ENCODE measurements at regions of chr2 and their contacts with region 1.

Region 1: DNA sequence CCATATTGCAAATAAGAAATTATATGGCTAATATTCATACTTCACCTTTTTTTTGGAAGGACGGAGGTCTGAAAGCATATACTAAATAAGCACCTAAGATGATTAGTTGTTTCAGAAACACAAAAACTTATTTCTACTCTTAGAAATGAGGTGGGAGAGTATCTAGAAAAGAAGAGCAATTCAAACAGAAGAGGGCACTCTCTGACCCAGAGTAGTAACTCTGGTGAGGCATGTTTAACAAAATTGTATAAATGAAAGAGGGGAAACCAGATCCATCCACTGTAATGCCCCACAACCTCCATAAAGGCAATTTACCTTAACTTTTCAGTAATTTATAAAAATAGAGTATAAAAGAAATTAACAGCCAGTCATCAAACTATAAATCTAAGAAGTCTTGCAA is 669.6 kb upstream of the VRK2 start:
- H3K4me3 Mint-ChIP-seq: no peak overlapping the region
- H3K27ac Mint-ChIP-seq: no peak overlapping the region
- H3K4me1 Mint-ChIP-seq: peaks cover 5% of the 10 kb centered on the region
- H3K27me3 Mint-ChIP-seq: no peaks in the 10 kb centered on the region

Region 2: GRCh38 chr2:57296795-57297517 is 80.0 kb before region 1 on chr2:
- intact Hi-C with region 1: no loop called
- H3K4me3 Mint-ChIP-seq: no peak overlapping the region
- H3K27ac Mint-ChIP-seq: no peak overlapping the region
- H3K4me1 Mint-ChIP-seq: no peaks in the 10 kb centered on the region
- H3K27me3 Mint-ChIP-seq: no peaks in the 10 kb centered on the region

Region 3: GRCh38 chr2:57497489-57498096 is 120.6 kb after region 1 on chr2:
- intact Hi-C with region 1: loop called (anchors 1 kb)
- H3K4me3 Mint-ChIP-seq: no peak overlapping the region
- H3K27ac Mint-ChIP-seq: no peak overlapping the region
- H3K4me1 Mint-ChIP-seq: no peaks in the 10 kb centered on the region
- H3K27me3 Mint-ChIP-seq: no peaks in the 10 kb centered on the region

Region 4: DNA sequence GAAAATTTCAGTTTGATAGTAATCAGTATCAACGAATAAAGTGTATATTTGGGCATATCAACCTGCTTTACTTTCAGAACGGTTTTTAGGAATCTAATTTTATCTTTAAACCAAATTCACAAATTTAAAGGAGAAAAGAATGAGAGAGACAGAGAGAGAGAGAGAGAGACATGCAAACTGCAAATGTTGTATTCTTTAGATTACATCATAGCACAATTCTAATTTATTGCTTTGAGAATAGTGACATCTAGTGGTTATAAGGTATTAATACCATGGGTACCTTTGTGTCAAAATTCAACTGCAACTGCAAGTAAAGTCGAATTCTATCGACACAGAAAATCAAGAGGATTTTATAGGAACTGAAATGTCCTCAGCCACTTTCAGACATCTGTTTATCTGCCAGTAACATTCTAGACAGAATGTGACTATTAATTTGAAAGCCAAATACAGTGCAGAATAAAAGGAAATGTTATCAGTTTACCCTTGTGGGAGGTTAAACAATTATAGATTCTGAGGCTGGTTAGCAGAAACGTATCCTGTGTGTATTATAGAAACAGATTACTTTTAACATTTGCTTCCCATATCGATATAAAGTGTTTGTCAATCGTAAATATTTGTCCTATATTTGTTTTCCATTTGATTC is 139.8 kb after region 1 on chr2:
- intact Hi-C with region 1: loop called (anchors 5 kb)
- H3K4me3 Mint-ChIP-seq: no peak overlapping the region
- H3K27ac Mint-ChIP-seq: no peak overlapping the region
- H3K4me1 Mint-ChIP-seq: peaks cover 7% of the 10 kb centered on the region
- H3K27me3 Mint-ChIP-seq: no peaks in the 10 kb centered on the region

Region 5: GRCh38 chr2:58107803-58108710 is 731.1 kb after region 1 on chr2:
- intact Hi-C with region 1: no loop called
- H3K4me3 Mint-ChIP-seq: peak overlapping the region; percentile 57
- H3K27ac Mint-ChIP-seq: peak overlapping the region; percentile 77
- H3K4me1 Mint-ChIP-seq: peaks cover 37% of the 10 kb centered on the region
- H3K27me3 Mint-ChIP-seq: no peaks in the 10 kb centered on the region

Measured in dendritic cell treated with granulocyte-macrophage colony-stimulating factor and Interleukin-4, amounts not matched to agents 40 ng/mL and 50 ng/mL, for 4 days (primary cell).